Caco-2 (cell line): ENCODE measurements at regions of chr3 and their contacts with region 1.

Region 1: DNA sequence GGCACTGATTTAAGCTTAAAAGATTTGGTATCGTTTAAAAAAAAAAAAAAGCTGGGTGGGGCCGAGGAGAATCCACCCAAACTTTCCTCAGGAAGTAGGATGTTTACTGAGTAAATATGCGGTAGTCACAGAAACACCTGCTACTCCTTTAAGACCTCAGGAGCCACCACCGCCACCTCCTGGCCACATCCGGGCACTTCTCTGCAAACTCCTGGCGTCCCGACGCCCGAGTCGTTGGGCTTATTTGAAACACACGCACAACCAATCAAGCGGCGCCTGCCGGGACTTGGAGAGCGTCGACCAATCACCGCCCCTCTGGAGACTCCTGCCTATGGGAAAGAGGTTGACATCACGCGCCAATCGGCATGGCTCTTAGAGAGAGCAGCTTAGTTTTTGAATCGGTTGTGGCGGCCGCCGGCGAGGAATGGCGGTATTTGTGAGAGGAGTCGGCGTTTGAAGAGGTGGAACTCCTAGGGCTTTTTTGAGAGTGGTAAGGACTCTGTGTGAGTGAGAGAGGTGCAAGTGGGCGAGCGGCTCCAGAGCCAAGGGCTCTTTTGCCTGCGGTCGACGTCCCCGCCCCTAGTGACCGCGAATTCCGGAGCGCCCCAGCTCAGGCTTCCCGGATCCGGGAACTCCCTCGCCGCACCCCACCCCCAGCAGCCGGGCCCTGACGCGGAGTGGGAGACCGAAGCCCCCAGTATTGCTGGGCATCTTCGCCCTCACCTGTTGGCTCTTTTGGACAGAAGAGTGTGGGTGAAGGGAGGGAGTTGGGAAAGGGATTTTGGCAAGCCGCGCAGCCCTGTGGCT is at the start of gene ECT2:
- DNase-seq: peak; percentile 97 to 99
- H3K4me3 ChIP-seq: peak within 1 kb of the TSS; percentile 71
- H3K4me3 Mint-ChIP-seq: peak within 1 kb of the TSS; percentile 79
- H3K27ac Mint-ChIP-seq: peak within 1 kb of the TSS; percentile 96
- H3K4me1 ChIP-seq: peaks cover 25% of the 10 kb centered on the region
- H3K4me1 Mint-ChIP-seq: peaks cover 33% of the 10 kb centered on the region
- H3K27me3 ChIP-seq: no peaks in the 10 kb centered on the region
- H3K27me3 Mint-ChIP-seq: no peaks in the 10 kb centered on the region
- CTCF ChIP-seq: peak; percentile 50 to 75
- total RNA-seq, gene ECT2: 66.6 and 68.0 TPM in 2 replicates

Region 2: GRCh38 chr3:172444821-172445220 is 305.8 kb before region 1 on chr3:
- CTCF ChIA-PET with region 1: no interaction called
- POLR2A ChIA-PET with region 1: interaction called, 15 read pairs
- intact Hi-C with region 1: no loop called
- DNase-seq: no peak
- H3K4me3 ChIP-seq: no peak overlapping the region
- H3K4me3 Mint-ChIP-seq: no peak overlapping the region
- H3K27ac Mint-ChIP-seq: no peak overlapping the region
- H3K4me1 ChIP-seq: 0 out of 2 replicates have a peak, but pooled peaks cover 3% of the 10 kb centered on the region
- H3K4me1 Mint-ChIP-seq: no peaks in the 10 kb centered on the region
- H3K27me3 ChIP-seq: no peaks in the 10 kb centered on the region
- H3K27me3 Mint-ChIP-seq: peaks cover 17% of the 10 kb centered on the region
- CTCF ChIP-seq: no peak

Region 3: DNA sequence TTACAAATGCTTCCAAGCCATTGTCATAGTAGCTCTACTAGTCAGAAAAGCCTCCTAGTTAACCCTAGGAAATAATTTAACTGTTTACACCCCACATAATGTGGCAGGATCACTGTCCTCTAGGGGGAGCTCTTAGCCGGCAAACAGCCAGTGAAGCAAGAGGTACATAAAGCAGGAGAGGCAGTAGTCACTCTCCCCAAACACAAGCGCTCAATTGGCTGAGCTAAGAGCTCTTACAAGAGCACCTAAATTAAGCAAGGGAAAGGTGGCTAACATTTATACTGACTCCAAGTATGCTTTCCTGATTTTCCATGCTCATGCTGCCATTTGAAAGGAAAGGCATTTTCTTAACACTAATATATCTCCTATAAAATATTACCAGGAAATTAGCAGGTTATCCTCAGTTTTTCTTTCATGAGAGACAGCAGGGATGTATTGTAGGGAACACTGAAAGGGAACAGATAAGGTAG is 77.3 kb before region 1 on chr3:
- CTCF ChIA-PET with region 1: interaction called, 23 read pairs
- POLR2A ChIA-PET with region 1: interaction called, 10 read pairs
- intact Hi-C with region 1: loop called (anchors 1 kb)
- DNase-seq: peak; percentile 82 to 84
- H3K4me3 ChIP-seq: no peak overlapping the region
- H3K4me3 Mint-ChIP-seq: no peak overlapping the region
- H3K27ac Mint-ChIP-seq: no peak overlapping the region
- H3K4me1 ChIP-seq: no peaks in the 10 kb centered on the region
- H3K4me1 Mint-ChIP-seq: no peaks in the 10 kb centered on the region
- H3K27me3 ChIP-seq: no peaks in the 10 kb centered on the region
- H3K27me3 Mint-ChIP-seq: no peaks in the 10 kb centered on the region
- CTCF ChIP-seq: peak; percentile 69 to 71

Region 4: DNA sequence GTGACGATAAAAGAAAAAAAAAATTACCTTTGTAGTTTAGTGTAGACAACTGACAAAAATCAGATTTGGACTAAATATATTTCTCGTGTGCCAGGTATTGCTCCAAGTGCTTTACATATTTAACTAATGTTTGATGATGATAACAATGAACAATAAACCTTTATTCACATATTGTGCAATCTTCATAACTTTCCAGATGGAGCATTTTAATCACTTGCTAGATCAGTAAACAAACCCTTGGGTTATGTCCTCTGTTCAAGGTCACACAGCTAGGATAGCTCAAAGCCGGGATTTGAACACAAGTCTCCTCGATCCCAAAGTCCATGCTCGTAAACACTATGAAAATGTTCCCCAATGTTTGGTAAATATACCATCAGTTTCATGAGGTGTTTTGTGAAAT is 54.2 kb before region 1 on chr3:
- CTCF ChIA-PET with region 1: interaction called, 4 read pairs
- POLR2A ChIA-PET with region 1: no interaction called
- intact Hi-C with region 1: loop called (anchors 1 kb)
- DNase-seq: no peak
- H3K4me3 ChIP-seq: no peak overlapping the region
- H3K4me3 Mint-ChIP-seq: no peak overlapping the region
- H3K27ac Mint-ChIP-seq: no peak overlapping the region
- H3K4me1 ChIP-seq: peaks cover 27% of the 10 kb centered on the region
- H3K4me1 Mint-ChIP-seq: peaks cover 17% of the 10 kb centered on the region
- H3K27me3 ChIP-seq: no peaks in the 10 kb centered on the region
- H3K27me3 Mint-ChIP-seq: no peaks in the 10 kb centered on the region
- CTCF ChIP-seq: no peak

Region 5: DNA sequence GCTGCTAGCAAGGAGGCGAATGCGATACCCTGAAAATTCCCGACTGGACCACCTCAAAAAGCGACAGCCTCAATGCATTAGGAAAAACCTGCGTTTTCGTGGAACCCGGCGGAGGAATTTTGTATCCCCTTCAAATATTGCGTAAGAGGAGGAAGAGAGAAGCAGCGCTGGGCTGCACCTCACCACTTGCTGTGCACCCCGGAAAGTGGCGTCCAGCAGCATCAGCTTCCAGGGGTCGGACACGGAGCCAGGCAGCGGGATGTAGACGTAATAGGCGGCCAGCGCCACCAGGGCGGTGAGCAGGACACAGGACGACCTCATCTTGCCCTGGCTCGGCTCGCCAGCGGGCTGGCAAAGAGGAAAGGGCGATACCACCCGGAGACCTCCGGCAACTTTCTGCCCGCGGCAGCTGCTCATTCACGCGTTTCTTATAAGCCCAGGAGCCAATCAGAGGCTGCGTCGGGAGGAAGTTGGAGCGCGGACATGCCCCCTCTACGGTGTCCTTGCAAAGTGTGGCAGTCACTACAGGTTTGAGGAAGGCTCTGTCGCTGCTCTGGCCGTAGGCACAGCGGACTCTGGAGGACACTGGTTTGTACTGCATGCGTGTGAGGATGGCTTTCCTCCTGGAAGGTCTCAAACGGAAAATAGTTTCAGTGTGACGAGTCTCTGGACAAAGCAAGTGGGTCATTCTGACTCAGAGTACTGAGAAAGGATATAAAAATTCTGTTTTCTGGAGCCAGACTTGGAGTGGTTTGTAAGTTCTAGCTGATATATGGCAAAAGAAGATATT is 39.7 kb before region 1 on chr3 and contains the start of gene NCEH1:
- CTCF ChIA-PET with region 1: interaction called, 11 read pairs
- POLR2A ChIA-PET with region 1: interaction called, 17 read pairs
- intact Hi-C with region 1: loop called (anchors 1 kb)
- DNase-seq: peak; percentile 91 to 95
- H3K4me3 ChIP-seq: peak within 1 kb of the TSS; percentile 62
- H3K4me3 Mint-ChIP-seq: peak within 1 kb of the TSS; percentile 96
- H3K27ac Mint-ChIP-seq: peak within 1 kb of the TSS; percentile 91
- H3K4me1 ChIP-seq: peaks cover 21% of the 10 kb centered on the region
- H3K4me1 Mint-ChIP-seq: peaks cover 15% of the 10 kb centered on the region
- H3K27me3 ChIP-seq: no peaks in the 10 kb centered on the region
- H3K27me3 Mint-ChIP-seq: no peaks in the 10 kb centered on the region
- CTCF ChIP-seq: peak; percentile 61 to 89
- total RNA-seq, gene NCEH1: 10.1 and 15.7 TPM in 2 replicates

Region 6: GRCh38 chr3:172717493-172718088 is 33.0 kb before region 1 on chr3:
- CTCF ChIA-PET with region 1: no interaction called
- POLR2A ChIA-PET with region 1: interaction called, 19 read pairs
- intact Hi-C with region 1: no loop called
- DNase-seq: no peak
- H3K4me3 ChIP-seq: no peak overlapping the region
- H3K4me3 Mint-ChIP-seq: no peak overlapping the region
- H3K27ac Mint-ChIP-seq: no peak overlapping the region
- H3K4me1 ChIP-seq: no peaks in the 10 kb centered on the region
- H3K4me1 Mint-ChIP-seq: peaks cover 7% of the 10 kb centered on the region
- H3K27me3 ChIP-seq: no peaks in the 10 kb centered on the region
- H3K27me3 Mint-ChIP-seq: no peaks in the 10 kb centered on the region
- CTCF ChIP-seq: peak in 1 of 2 experiments; percentile 21